ENCODE measurements at regions of chr5 and their contacts with region 1.

Region 1: DNA sequence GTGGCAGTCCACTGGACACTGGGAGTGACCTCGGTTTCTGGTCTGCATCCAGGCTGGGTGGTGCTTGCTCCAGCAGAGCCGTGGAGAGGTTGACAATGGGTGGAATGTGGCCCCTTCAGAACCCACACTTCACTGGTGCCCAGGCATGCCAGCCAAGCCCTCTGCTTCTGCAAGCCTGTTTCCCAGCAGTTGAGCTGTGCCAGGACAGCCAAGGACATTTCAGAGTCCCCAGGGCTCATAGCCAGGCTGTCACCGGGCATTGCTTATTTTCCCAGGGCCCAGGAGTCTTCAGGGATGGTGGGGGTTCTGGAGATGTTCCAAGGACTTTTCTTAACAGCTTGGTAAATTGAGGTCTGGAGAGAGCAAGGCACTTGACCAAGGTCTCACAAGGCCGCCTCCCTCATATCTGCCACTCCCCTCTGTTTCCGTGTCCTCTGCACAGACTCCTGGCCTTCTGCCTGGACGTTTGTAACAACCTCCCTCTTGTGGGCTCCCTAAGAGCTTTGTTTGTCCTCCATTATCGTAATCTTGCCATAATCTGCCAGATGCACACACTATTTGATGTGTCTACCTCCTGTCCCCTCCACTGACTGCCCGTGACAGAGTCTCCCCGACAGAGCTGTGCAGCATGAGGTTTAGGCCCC is 3.8 kb upstream of the NDST1 start:
- DNase-seq: no peak

Region 2: GRCh38 chr5:150350524-150351344 is 153.4 kb before region 1 on chr5:
- intact Hi-C with region 1: no loop called
- DNase-seq: peak; percentile 82

Region 3: GRCh38 chr5:150486402-150487198 is 17.5 kb before region 1 on chr5:
- intact Hi-C with region 1: loop called (anchors 2 kb)
- DNase-seq: no peak